ENCODE measurements at regions of chr10 and their contacts with region 1.

Region 1: GRCh38 chr10:86693721-86694369 is 25.5 kb downstream of the LDB3 start:
- DNase-seq: peak; percentile 28 to 61
- ATAC-seq: peak; percentile 52 to 83; a peak in 3 of 6 replicates
- H3K4me3 ChIP-seq: no peak overlapping the region
- H3K27ac ChIP-seq: no peak overlapping the region
- H3K4me1 ChIP-seq: no peaks in the 10 kb centered on the region
- CTCF ChIP-seq: peak; percentile 64
- EP300 ChIP-seq: no peak
- POLR2A ChIP-seq: no peak
- RAD21 ChIP-seq: peak; percentile 42 to 58; a peak in 4 of 5 replicates

Region 2: GRCh38 chr10:86710987-86711512 is 17.2 kb after region 1 on chr10:
- CTCF ChIA-PET with region 1: interaction called, 16 read pairs
- POLR2A ChIA-PET with region 1: no interaction called
- DNase-seq: peak; percentile 88 to 90
- ATAC-seq: peak; percentile 88 to 96
- H3K4me3 ChIP-seq: peak overlapping the region; percentile 72
- H3K27ac ChIP-seq: peak overlapping the region; percentile 96 to 100
- H3K4me1 ChIP-seq: peaks cover 11% of the 10 kb centered on the region; the same call in 2 of the 3 replicates
- CTCF ChIP-seq: peak; percentile 84
- EP300 ChIP-seq: no peak
- POLR2A ChIP-seq: peak; percentile 58
- RAD21 ChIP-seq: peak; percentile 55 to 86

Region 3: DNA sequence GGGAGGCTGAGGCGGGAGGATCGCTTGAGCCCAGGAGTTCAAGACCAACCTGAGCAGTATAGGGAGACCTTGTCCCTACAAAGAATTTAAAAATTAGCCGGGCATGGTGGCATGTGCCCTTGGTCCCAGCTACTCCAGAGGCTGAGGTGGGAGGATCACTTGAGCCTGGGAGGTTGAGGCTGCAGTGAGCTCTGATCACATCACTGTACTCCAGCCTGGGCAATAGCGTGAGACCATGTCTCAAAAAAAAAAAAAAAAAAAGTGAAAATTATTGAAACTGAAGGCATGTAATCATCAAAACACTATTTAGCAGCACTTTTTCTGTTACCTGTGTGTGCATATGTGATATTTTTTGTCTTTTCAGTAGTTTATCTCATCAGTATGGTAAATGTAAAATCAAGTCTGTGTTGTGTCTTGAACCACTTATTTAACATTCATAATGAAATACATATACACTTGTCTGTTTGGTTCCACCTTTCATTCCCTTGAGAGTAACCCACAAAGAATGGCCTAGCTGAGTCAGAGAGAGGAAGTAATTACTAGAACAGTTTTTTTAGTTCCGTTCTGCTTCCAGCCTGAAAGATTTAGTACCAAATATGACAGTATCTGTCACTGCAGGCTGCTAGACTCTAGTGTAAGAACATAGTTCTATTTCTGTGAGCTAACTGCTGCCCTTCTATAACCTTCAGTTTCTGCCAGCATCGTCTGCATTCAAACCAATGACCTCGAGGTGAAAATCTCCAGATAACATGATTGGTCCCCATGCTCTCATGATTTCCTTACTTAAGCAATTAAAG is 194.9 kb after region 1 on chr10:
- CTCF ChIA-PET with region 1: interaction called, 10 read pairs
- POLR2A ChIA-PET with region 1: no interaction called
- DNase-seq: no peak
- ATAC-seq: no peak
- H3K4me3 ChIP-seq: no peak overlapping the region
- H3K27ac ChIP-seq: no peak overlapping the region
- H3K4me1 ChIP-seq: no peaks in the 10 kb centered on the region
- CTCF ChIP-seq: no peak
- EP300 ChIP-seq: no peak
- POLR2A ChIP-seq: no peak
- RAD21 ChIP-seq: no peak

Region 4: GRCh38 chr10:86899670-86900276 is 205.9 kb after region 1 on chr10:
- CTCF ChIA-PET with region 1: interaction called, 37 read pairs
- POLR2A ChIA-PET with region 1: no interaction called
- DNase-seq: peak; percentile 59 to 77
- ATAC-seq: peak; percentile 87 to 90
- H3K4me3 ChIP-seq: no peak overlapping the region
- H3K27ac ChIP-seq: no peak overlapping the region
- H3K4me1 ChIP-seq: no peaks in the 10 kb centered on the region
- CTCF ChIP-seq: peak; percentile 82
- EP300 ChIP-seq: no peak
- POLR2A ChIP-seq: no peak
- RAD21 ChIP-seq: peak; percentile 77 to 81

Measured in A549 (cell line).